PC-9 (cell line): ENCODE measurements at regions of chr17 and their contacts with region 1.

Region 1: GRCh38 chr17:8887834-8888703 is 20.6 kb upstream of the PIK3R6 start:
- DNase-seq: peak in 1 of 2 experiments; percentile 58
- H3K4me3 ChIP-seq: no peak overlapping the region
- H3K27ac ChIP-seq: no peak overlapping the region
- H3K4me1 ChIP-seq: no peaks in the 10 kb centered on the region
- H3K27me3 ChIP-seq: peaks cover 15% of the 10 kb centered on the region; the same call in 1 of the 2 replicates
- CTCF ChIP-seq: no peak

Region 2: DNA sequence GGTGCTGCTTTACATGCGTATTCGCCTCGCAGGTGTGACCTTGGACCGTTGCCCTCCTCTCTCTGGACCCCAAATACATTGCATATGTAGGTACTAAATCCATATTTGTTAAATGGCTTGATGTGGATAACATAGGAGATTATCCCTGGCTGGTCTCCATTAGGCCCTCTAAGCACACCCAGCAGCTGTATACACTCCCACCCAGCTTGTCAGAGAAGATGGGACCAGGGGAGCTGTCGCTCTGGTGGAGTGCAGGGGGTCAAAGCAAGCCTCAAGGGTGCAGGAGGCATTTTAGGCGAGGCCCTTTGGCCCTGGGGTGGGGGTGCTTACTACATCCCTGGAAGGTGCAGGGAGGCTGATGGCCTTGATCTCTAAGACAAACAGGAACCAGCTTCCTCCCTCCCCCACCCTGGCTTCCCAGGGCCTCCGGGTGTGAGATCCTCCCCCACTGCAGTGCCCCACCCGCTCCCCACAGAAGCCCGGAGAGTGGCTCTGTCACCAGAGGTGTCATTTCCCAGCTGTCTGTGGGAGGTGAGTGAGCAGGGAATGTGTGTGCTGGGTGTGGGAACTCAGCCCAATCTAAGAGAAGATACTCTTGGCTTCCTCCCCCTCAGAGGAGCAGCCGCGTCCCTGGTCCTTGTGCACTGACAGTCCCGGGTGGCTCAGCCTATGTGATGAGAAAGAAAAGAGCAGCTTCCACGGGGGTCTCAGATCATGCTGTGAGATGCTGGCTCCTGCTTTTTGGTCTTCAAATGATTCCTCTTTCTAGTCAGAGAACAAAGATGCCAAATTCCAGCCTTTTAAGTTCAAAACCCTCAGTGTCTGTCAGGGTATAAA is 723.9 kb before region 1 on chr17:
- CTCF ChIA-PET with region 1: interaction called, 11 read pairs
- POLR2A ChIA-PET with region 1: no interaction called
- intact Hi-C with region 1: no loop called
- DNase-seq: peak in 1 of 2 experiments; percentile 48
- H3K4me3 ChIP-seq: no peak overlapping the region
- H3K27ac ChIP-seq: no peak overlapping the region
- H3K4me1 ChIP-seq: peaks cover 8% of the 10 kb centered on the region; the same call in 1 of the 2 replicates
- H3K27me3 ChIP-seq: no peaks in the 10 kb centered on the region
- CTCF ChIP-seq: no peak

Region 3: GRCh38 chr17:8997994-8998628 is 110.0 kb after region 1 on chr17:
- CTCF ChIA-PET with region 1: no interaction called
- POLR2A ChIA-PET with region 1: no interaction called
- intact Hi-C with region 1: no loop called
- DNase-seq: peak in 1 of 2 experiments; percentile 70
- H3K4me3 ChIP-seq: no peak overlapping the region
- H3K27ac ChIP-seq: no peak overlapping the region
- H3K4me1 ChIP-seq: no peaks in the 10 kb centered on the region
- H3K27me3 ChIP-seq: no peaks in the 10 kb centered on the region
- CTCF ChIP-seq: peak; percentile 79

Region 4: DNA sequence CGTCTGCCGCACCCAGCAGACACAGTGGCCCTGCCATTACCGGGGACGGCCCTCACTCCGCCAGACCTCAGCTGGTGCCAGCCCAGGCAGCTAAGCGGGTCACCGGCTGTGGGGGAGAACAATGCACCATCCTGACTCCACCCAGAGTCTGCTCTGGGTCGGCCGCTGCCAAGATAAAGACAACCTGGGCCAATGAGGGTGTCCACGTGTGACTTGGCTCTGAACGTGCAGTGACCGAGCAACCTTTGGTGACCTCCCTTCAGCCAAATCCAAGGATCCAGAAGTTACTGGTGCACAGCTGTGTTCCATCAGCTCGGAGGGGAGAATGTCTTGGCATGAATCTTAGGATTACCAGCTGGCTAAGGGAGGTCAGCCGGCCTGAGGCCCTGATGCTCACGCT is 289.1 kb after region 1 on chr17:
- CTCF ChIA-PET with region 1: no interaction called
- POLR2A ChIA-PET with region 1: no interaction called
- intact Hi-C with region 1: loop called (anchors 5 kb)
- DNase-seq: no peak
- H3K4me3 ChIP-seq: no peak overlapping the region
- H3K27ac ChIP-seq: no peak overlapping the region
- H3K4me1 ChIP-seq: no peaks in the 10 kb centered on the region
- H3K27me3 ChIP-seq: no peaks in the 10 kb centered on the region
- CTCF ChIP-seq: no peak

Region 5: GRCh38 chr17:9522074-9522473 is 634.0 kb after region 1 on chr17:
- CTCF ChIA-PET with region 1: interaction called, 3 read pairs
- POLR2A ChIA-PET with region 1: no interaction called
- intact Hi-C with region 1: loop called (anchors 1 kb)
- DNase-seq: peak in 1 of 2 experiments; percentile 17
- H3K4me3 ChIP-seq: no peak overlapping the region
- H3K27ac ChIP-seq: no peak overlapping the region
- H3K4me1 ChIP-seq: no peaks in the 10 kb centered on the region
- H3K27me3 ChIP-seq: no peaks in the 10 kb centered on the region
- CTCF ChIP-seq: peak; percentile 58

Region 6: DNA sequence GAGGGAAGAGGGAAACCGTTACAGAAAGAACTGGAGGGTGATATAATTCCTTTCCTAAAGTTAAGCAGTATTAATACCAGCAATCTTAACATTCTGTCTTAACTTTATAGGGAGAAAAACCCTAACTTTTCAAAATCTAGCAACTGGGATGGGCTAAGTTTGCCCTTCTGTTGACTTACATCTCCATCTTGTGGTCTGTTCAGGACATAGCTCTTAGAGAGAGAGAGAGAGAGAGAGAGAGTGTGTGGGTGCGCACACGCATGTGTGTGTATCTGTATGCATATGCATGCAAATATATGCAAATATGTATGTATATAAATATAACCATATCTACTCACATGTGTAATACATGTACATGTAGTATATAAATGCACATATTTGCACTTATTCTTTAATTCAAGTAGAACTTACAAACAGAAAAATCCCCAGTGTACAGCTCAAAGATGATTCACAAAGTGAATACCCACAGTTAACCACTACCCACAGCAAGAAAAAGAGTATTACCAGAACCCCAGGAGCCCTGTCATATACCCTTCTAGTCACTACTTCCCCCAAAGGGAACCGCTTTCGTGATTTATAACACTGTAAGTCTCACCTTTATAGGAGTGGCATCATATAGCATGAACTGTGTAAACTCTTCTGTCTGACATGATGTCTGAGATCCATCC is 641.1 kb after region 1 on chr17:
- CTCF ChIA-PET with region 1: no interaction called
- POLR2A ChIA-PET with region 1: no interaction called
- intact Hi-C with region 1: loop called (anchors 2 kb)
- DNase-seq: no peak
- H3K4me3 ChIP-seq: no peak overlapping the region
- H3K27ac ChIP-seq: no peak overlapping the region
- H3K4me1 ChIP-seq: no peaks in the 10 kb centered on the region
- H3K27me3 ChIP-seq: no peaks in the 10 kb centered on the region
- CTCF ChIP-seq: peak; percentile 52